PC-9 (cell line): ENCODE measurements at regions of chr5 and their contacts with region 1.

Region 1: GRCh38 chr5:10452768-10453331 is 11.2 kb downstream of the ROPN1L start:
- DNase-seq: peak; percentile 62 to 77
- H3K4me3 ChIP-seq: no peak overlapping the region
- H3K27ac ChIP-seq: peak overlapping the region; percentile 72
- H3K4me1 ChIP-seq: peaks cover 43% of the 10 kb centered on the region
- H3K27me3 ChIP-seq: no peaks in the 10 kb centered on the region
- CTCF ChIP-seq: peak; percentile 95

Region 2: DNA sequence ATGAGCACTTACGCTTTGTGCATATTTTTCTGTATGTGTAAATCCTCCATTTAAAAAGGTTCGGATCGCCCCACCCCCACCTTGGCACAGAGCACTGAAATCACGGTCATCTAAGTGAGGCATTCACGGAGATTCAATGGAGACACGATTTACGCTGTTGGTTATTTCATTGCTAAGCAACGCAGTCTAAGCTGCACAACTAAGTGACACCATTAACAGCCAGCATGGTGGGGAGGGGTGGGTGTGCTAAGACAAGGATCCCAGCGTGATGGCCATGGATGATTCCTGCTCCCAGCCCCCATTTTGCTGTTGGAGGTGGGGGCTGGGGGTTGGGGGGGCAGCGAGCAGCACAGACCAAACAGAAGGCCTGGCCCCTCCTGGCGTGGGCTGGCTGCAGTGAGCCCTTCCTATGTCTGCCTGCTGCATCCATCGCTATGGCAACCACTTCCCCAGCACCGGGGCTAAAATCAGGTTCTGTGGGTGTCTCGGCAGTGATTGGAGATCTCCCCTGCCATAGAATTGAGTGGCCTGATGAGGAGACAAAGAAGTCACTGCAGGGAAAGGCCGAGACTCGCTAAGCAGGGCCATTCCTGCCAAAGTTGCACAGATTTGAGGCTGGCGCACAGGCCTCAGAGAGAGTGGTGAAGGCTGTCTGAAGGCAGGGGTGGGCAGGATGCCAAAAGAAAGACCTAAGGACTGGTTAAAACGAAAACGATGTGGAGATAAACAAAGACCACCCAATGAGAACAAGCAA is 113.6 kb before region 1 on chr5:
- CTCF ChIA-PET with region 1: no interaction called
- POLR2A ChIA-PET with region 1: no interaction called
- intact Hi-C with region 1: no loop called
- DNase-seq: no peak
- H3K4me3 ChIP-seq: no peak overlapping the region
- H3K27ac ChIP-seq: no peak overlapping the region
- H3K4me1 ChIP-seq: 0 out of 2 replicates have a peak, but pooled peaks cover under 1% of the 10 kb centered on the region
- H3K27me3 ChIP-seq: peaks cover 2% of the 10 kb centered on the region; the same call in 1 of the 2 replicates
- CTCF ChIP-seq: no peak

Region 3: DNA sequence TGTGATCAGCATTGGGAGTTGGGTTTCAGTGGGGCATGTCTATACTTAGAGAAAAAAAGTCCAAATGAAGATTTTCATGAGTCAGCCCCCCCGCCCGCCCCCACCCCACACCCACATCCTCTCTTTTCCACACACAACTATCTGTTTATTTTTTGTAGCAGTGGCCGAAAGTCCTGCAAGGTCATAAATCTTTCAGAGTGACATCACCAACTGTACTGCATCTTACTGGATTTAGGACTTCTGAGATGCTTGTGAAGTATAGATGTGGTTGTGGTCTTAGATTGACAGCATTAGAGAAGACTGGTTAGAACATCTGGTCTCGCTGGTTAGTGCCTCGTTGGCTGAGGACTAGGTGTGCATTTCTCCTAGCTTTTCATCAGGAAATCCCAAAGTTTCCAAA is 18.5 kb before region 1 on chr5:
- CTCF ChIA-PET with region 1: no interaction called
- POLR2A ChIA-PET with region 1: no interaction called
- intact Hi-C with region 1: no loop called
- DNase-seq: no peak
- H3K4me3 ChIP-seq: no peak overlapping the region
- H3K27ac ChIP-seq: no peak overlapping the region
- H3K4me1 ChIP-seq: no peaks in the 10 kb centered on the region
- H3K27me3 ChIP-seq: no peaks in the 10 kb centered on the region
- CTCF ChIP-seq: no peak

Region 4: GRCh38 chr5:10513501-10514442 is 60.9 kb after region 1 on chr5:
- CTCF ChIA-PET with region 1: no interaction called
- POLR2A ChIA-PET with region 1: no interaction called
- intact Hi-C with region 1: loop called (anchors 2 kb)
- DNase-seq: peak; percentile 75 to 95
- H3K4me3 ChIP-seq: no peak overlapping the region
- H3K27ac ChIP-seq: peak overlapping the region; percentile 91
- H3K4me1 ChIP-seq: peaks cover 56% of the 10 kb centered on the region
- H3K27me3 ChIP-seq: no peaks in the 10 kb centered on the region
- CTCF ChIP-seq: no peak

Region 5: GRCh38 chr5:10563945-10564837 is 111.3 kb after region 1 on chr5 and contains the start of gene ANKRD33B:
- CTCF ChIA-PET with region 1: interaction called, 3 read pairs
- POLR2A ChIA-PET with region 1: no interaction called
- intact Hi-C with region 1: loop called (anchors 1 kb)
- DNase-seq: peak; percentile 72 to 95
- H3K4me3 ChIP-seq: peak within 1 kb of the TSS; percentile 90
- H3K27ac ChIP-seq: peak within 1 kb of the TSS; percentile 86
- H3K4me1 ChIP-seq: peaks cover 46% of the 10 kb centered on the region
- H3K27me3 ChIP-seq: no peaks in the 10 kb centered on the region
- CTCF ChIP-seq: no peak
- total RNA-seq, gene ANKRD33B: 32.1 and 37.4 TPM in 2 replicates

Region 6: GRCh38 chr5:10695055-10695649 is 242.3 kb after region 1 on chr5:
- CTCF ChIA-PET with region 1: interaction called, 4 read pairs
- POLR2A ChIA-PET with region 1: no interaction called
- intact Hi-C with region 1: loop called (anchors 1 kb)
- DNase-seq: peak; percentile 66 to 93
- H3K4me3 ChIP-seq: no peak overlapping the region
- H3K27ac ChIP-seq: peak overlapping the region; percentile 42
- H3K4me1 ChIP-seq: peaks cover 24% of the 10 kb centered on the region
- H3K27me3 ChIP-seq: no peaks in the 10 kb centered on the region
- CTCF ChIP-seq: peak; percentile 90

Region 7: GRCh38 chr5:11046160-11046559 is 593.3 kb after region 1 on chr5:
- CTCF ChIA-PET with region 1: interaction called, 9 read pairs
- POLR2A ChIA-PET with region 1: no interaction called
- intact Hi-C with region 1: loop called (anchors 5 kb)
- DNase-seq: no peak
- H3K4me3 ChIP-seq: no peak overlapping the region
- H3K27ac ChIP-seq: no peak overlapping the region
- H3K4me1 ChIP-seq: no peaks in the 10 kb centered on the region
- H3K27me3 ChIP-seq: no peaks in the 10 kb centered on the region
- CTCF ChIP-seq: no peak

Region 8: GRCh38 chr5:11518656-11519055 is 1065.8 kb after region 1 on chr5:
- CTCF ChIA-PET with region 1: interaction called, 14 read pairs
- POLR2A ChIA-PET with region 1: no interaction called
- intact Hi-C with region 1: no loop called
- DNase-seq: no peak
- H3K4me3 ChIP-seq: no peak overlapping the region
- H3K27ac ChIP-seq: no peak overlapping the region
- H3K4me1 ChIP-seq: no peaks in the 10 kb centered on the region
- H3K27me3 ChIP-seq: 0 out of 2 replicates have a peak, but pooled peaks cover 6% of the 10 kb centered on the region
- CTCF ChIP-seq: no peak